ENCODE measurements at regions of chr16 and their contacts with region 1.

Region 1: GRCh38 chr16:73047518-73048291 is at the start of gene ZFHX3:
- DNase-seq: no peak
- H3K4me3 ChIP-seq: peak within 1 kb of the TSS; percentile 73 to 79
- H3K27ac ChIP-seq: peak within 1 kb of the TSS; percentile 85
- H3K4me1 ChIP-seq: peaks cover 56% of the 10 kb centered on the region
- H3K27me3 ChIP-seq: no peaks in the 10 kb centered on the region
- CTCF ChIP-seq: no peak
- POLR2A ChIP-seq: no peak
- total RNA-seq, gene ZFHX3: 28.0 TPM

Region 2: GRCh38 chr16:72847187-72848027 is 200.3 kb before region 1 on chr16:
- intact Hi-C with region 1: loop called (anchors 10 kb)
- DNase-seq: no peak
- H3K4me3 ChIP-seq: no peak overlapping the region
- H3K27ac ChIP-seq: peak overlapping the region; percentile 67
- H3K4me1 ChIP-seq: peaks cover 32% of the 10 kb centered on the region
- H3K27me3 ChIP-seq: no peaks in the 10 kb centered on the region
- CTCF ChIP-seq: no peak
- POLR2A ChIP-seq: no peak

Region 3: DNA sequence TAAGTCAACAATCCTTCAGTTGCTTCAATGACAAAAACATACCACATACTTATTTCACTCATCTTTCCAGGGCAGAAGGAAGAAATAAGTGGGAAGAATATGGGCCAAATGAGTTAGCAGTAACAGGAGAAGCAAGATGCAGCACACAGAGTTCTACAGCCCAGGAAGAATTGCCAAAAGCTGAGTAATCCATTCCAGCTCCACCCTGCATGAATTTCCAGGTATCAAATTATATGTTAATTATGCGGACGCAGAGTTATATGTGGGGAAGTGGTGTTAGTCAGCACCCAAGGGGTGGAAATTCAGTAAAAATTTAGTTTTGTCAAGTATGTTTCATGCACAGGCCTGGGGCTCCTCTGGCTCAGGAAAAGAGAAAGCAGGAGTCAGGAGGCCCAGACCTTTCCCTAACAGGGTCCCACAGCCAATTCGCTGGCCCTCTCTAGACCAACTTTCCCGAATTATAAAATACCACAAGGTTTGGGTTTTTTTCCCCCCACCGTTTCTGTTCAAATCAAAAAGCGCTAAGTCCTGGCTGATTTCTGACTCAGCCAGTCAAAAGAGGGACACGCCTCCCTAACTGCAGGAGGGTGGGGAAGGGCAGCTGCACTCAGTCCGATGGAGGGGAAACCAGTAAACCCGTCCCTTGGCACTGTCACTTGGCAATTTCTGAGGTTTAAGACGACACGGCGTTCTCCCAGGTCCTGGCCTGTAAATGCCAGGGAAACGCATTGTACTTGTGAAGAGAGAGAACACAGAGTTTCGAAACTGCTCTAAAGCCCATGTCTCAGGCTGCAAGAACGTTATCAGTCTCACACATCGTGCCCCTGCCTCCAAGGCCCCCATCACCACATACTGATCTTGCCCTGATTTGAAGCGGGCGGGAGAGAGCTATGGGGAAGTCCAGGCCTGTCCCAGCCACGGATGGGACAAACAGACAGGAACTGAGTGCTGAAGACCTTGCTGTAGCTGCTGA is 57.8 kb before region 1 on chr16:
- intact Hi-C with region 1: loop called (anchors 10 kb)
- DNase-seq: peak in 1 of 2 donors; percentile 98
- H3K4me3 ChIP-seq: peak overlapping the region; percentile 16 to 23
- H3K27ac ChIP-seq: peak overlapping the region; percentile 78
- H3K4me1 ChIP-seq: peaks cover 73% of the 10 kb centered on the region
- H3K27me3 ChIP-seq: no peaks in the 10 kb centered on the region
- CTCF ChIP-seq: no peak
- POLR2A ChIP-seq: no peak

Measured in vagina (tissue), 2 donors.